ENCODE measurements at regions of chr6 and their contacts with region 1.

Region 1: DNA sequence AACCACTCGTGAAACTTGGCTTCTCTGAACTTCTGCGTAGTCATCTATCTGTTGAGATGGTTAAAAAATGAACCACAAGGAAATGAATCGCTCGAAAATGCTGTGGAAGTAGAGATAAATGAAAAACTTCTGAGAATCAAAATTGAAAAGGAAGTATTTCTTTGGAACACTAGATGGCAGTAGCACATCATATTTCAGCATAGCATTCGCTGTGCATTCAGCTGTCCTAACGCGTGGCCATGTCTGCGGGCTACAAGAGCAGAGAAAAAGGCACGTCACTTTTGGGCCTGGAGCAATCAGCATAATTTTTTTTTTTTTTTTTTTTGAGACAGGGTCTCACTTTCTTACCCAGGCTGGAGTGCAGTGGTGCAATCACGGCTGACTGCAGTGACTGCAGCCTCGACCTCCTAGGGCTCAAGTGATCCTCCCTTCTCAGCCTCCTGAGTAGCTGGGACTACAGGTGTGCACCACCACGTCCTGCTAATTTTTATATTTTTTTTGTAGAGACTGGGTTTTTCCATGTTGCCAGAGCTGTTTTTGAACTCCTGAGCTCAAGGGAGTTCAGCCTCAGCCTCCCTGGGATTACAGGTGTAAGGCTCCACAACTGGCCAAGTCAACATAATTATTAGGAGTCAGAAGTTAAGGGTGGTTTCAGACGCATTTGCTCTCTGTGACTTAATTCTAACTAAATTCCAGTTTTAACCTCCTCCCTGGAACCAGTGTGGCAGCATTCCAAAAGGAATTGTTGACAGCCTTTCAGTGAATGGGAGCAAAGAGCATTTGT is 8.8 kb upstream of the PERP start:
- DNase-seq: peak in 1 of 2 donors; percentile 55
- ATAC-seq: peak; percentile 89
- H3K4me3 ChIP-seq: no peak overlapping the region
- H3K27ac ChIP-seq: no peak overlapping the region
- H3K4me1 ChIP-seq: no peaks in the 10 kb centered on the region
- H3K27me3 ChIP-seq: no peaks in the 10 kb centered on the region

Region 2: GRCh38 chr6:138278326-138278725 is 162.3 kb after region 1 on chr6:
- intact Hi-C with region 1: loop called in 1 of 2 experiments (anchors 10 kb)
- DNase-seq: no peak
- ATAC-seq: peak; percentile 45
- H3K4me3 ChIP-seq: no peak overlapping the region
- H3K27ac ChIP-seq: no peak overlapping the region
- H3K4me1 ChIP-seq: no peaks in the 10 kb centered on the region
- H3K27me3 ChIP-seq: no peaks in the 10 kb centered on the region

Region 3: DNA sequence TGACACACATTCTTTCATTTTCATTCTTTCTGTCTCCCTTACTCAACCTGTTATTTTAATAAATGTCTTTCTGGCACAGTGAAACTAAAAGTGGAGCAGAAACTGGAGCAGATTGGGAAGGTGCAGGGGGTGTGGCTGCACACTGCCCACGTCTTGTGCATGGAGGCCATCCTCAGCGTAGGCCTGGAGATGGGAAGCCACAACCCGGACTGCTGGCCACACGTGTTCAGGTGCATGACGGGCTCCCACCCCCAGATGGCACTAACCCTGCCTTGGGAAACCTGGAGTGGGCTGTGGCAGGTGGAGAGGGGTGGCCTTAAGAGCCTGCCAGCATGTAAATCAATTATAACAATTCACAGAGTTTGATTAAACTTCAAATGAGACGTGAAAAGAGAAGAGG is 173.7 kb after region 1 on chr6:
- intact Hi-C with region 1: loop called in 1 of 2 experiments (anchors 5 kb)
- DNase-seq: no peak
- ATAC-seq: no peak
- H3K4me3 ChIP-seq: no peak overlapping the region
- H3K27ac ChIP-seq: no peak overlapping the region
- H3K4me1 ChIP-seq: no peaks in the 10 kb centered on the region
- H3K27me3 ChIP-seq: no peaks in the 10 kb centered on the region

Region 4: DNA sequence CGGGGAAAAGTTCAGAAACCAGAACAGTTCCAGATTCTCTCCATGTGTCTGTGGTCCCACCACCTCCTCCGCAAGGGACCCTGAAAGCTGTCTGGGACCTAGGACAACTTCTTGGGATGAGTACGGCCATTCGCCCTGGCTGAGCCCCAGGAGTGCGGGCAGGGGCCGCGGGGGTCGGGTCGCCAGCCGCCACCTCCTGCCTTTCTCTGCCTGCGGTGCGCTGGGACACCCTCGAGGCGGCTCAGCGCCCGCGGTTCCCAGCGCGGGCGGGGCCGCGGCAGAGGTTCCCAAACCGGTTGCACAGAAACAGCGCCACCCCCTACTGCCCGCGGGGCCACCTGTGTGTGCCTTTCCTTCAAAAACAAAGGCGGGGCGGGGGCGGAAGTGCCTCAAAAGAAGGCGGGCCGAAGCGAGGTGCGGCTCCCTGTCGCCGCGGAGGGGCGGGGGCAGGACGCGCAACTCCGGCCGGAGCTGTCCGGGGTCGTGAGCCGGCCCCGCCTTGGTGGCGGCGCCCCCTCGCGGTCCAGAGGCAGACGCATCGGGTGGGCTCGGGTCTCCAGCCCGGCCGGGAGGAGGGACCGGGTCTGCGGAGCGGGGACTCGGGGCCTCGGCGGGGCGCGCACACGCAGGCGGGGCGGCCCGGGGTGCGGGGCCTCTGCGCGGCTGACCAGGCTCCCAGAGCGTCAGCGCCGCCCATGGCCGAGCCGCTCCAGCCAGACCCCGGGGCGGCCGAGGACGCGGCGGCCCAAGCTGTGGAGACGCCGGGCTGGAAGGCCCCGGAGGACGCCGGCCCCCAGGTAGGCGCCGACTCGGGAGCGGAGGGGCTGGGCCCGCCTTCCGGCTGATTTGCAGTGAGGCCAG is 288.0 kb after region 1 on chr6 and contains the start of gene HEBP2:
- intact Hi-C with region 1: loop called (anchors 10 kb)
- DNase-seq: peak; percentile 94 to 97
- ATAC-seq: peak; percentile 94
- H3K4me3 ChIP-seq: peak within 1 kb of the TSS; percentile 24 to 90
- H3K27ac ChIP-seq: peak within 1 kb of the TSS; percentile 39 to 94
- H3K4me1 ChIP-seq: no peaks in the 10 kb centered on the region
- H3K27me3 ChIP-seq: no peaks in the 10 kb centered on the region
- total RNA-seq, gene HEBP2: 58.6 to 68.0 TPM

Region 5: DNA sequence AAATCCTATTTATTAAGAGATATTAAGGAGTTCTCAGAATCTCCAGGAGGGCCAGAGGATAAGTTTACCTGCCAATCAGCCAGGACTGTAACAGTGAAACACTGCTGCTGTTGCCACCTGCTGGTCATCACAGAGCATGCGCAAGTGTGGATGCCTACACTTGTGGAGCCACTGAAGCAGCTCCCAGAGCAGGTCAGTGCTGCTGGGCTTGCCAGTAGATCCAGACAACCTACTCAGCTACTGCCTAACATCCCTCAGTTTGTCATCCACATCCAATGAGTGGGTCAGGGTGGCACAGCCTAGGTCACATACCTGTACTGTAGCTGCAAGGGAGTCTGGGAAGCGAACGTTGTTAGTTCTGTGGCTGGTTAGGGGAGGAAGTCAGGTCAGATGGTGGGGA is 401.6 kb after region 1 on chr6:
- intact Hi-C with region 1: loop called (anchors 5 kb)
- DNase-seq: peak in 1 of 2 donors; percentile 53
- ATAC-seq: peak; percentile 60
- H3K4me3 ChIP-seq: no peak overlapping the region
- H3K27ac ChIP-seq: no peak overlapping the region
- H3K4me1 ChIP-seq: no peaks in the 10 kb centered on the region
- H3K27me3 ChIP-seq: no peaks in the 10 kb centered on the region

Region 6: DNA sequence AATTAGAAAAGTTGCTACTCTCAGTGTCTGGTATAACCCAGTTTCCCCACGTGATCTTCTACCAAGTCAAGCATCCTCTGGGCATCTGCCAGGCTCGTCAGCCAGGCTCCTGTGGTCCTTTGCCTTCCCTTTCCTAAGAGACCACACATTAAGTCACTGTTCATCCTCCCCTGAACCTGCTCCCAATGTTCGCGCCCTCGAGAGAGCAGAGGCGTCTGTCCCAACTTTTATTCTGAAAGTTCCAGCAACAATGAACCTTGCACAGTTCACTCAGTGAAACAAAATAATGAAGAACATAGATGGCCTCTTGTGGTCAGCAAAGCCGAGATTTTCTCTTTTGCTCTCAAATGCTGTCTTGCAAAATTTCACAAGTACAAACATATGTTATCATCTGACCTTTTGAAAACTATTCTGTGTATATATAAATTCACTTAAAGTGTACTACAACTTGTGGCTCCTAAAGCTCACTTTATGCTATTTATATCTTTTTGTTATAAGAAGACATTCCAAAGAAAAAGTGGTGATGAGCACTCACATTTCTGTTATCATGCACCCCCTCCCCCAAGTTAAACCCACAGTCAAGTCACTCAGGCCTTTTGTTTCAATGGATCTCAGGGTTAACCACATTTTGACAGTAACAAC is 422.4 kb after region 1 on chr6:
- intact Hi-C with region 1: no loop called
- DNase-seq: no peak
- ATAC-seq: no peak
- H3K4me3 ChIP-seq: no peak overlapping the region
- H3K27ac ChIP-seq: no peak overlapping the region
- H3K4me1 ChIP-seq: no peaks in the 10 kb centered on the region
- H3K27me3 ChIP-seq: no peaks in the 10 kb centered on the region

Region 7: GRCh38 chr6:138588805-138589434 is 472.9 kb after region 1 on chr6:
- intact Hi-C with region 1: loop called (anchors 2 to 5 kb)
- DNase-seq: no peak
- ATAC-seq: peak; percentile 85
- H3K4me3 ChIP-seq: no peak overlapping the region
- H3K27ac ChIP-seq: no peak overlapping the region
- H3K4me1 ChIP-seq: no peaks in the 10 kb centered on the region
- H3K27me3 ChIP-seq: no peaks in the 10 kb centered on the region

Region 8: DNA sequence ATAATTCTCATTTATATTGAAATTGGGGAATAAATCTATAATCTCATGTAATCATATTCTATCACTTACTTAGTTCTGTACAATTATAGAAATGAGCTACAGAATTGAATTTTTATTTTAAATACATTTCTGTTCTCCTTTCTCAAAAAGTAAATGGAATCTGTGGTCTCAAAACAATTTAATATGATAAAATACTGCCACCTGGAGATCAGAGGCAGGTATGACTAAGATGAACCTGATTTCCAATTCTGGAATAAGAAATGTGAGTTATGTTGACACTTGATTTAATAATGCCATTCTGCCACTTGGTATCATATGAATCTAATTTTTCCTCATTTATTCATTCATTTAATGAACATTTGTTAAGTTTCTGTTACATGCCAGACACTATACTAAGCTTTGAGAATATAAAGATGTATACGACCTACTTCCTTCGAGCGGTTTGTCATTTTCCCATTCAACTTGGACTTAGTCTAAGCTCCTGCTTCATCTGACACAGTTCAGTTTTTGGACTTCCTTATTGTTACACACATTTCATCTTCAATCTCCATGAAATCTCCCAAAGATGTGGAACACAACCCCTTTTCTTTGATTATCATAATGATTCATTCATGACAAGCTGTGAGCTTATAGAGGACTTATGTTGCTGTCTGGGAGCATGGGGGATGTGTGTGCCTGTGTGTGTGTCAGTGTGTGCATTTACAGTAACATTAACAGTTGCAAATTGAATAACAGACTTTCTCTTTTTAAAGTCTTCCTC is 650.0 kb after region 1 on chr6:
- intact Hi-C with region 1: loop called in 1 of 2 experiments (anchors 10 kb)
- DNase-seq: no peak
- ATAC-seq: no peak
- H3K4me3 ChIP-seq: no peak overlapping the region
- H3K27ac ChIP-seq: no peak overlapping the region
- H3K4me1 ChIP-seq: no peaks in the 10 kb centered on the region
- H3K27me3 ChIP-seq: no peaks in the 10 kb centered on the region

Measured in aorta (tissue), 5 donors.